Ovary (tissue), 10 donors: ENCODE measurements at regions of chr17 and their contacts with region 1.

Region 1: DNA sequence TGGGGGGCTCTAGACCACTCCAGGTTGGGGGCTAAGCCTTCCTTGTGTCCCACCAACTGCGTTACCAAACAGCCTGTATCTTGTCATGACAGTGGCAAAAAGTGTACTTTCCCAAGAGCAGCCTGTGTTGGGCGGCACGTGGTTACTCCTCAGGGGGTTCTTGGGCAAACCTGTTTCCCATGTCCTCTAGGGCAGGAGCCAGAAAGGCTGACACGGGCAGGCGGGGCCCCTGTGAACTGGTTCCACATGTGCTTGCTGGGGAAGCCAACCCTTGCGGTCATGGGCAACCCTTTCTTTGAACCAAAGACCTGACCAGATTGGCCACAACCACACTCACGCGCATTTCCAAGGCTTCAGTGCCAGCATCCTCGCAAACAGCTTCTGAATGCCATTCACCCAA is 228.5 kb downstream of the RBFOX3 start:
- DNase-seq: no peak
- H3K4me3 ChIP-seq: no peak overlapping the region
- H3K27ac ChIP-seq: no peak overlapping the region
- H3K4me1 ChIP-seq: no peaks in the 10 kb centered on the region
- H3K27me3 ChIP-seq: no peaks in the 10 kb centered on the region
- CTCF ChIP-seq: no peak
- EP300 ChIP-seq: no peak
- POLR2A ChIP-seq: no peak

Region 2: DNA sequence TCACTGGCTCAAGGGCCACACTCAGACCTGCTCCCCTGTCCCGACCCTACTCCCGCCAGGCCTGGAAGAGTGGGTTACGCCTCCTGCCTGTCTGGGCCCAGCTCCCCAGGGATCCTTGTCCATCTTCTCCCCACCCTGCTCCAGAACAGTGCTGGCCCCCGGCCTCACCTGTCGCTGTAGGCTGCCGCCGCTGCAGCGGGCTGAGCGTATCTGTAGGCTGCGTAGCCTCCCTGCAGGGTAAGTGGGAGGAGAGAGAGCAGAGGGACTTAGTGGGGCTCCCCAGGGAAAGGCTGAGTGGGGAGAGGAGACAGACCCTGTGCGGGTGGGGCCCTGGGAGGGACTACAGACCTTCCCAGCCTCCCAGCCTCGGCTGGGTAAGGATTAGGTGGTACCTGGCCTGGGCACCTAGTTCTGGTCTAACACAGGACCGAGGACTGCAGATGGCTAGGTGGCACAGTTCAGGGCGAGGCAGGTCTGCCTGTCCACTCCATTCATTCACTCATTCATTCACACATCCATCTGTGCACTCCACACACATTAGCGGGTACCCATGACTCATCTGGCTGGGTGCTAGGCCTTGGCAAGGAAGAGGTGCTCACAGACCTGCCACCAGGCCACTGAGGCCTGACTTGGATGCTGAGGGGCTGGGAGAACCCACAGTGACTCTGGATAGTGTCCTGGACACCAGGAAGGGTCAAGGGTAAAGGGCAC is 286.8 kb before region 1 on chr17:
- intact Hi-C with region 1: loop called in 1 of 4 experiments (anchors 5 kb)
- DNase-seq: no peak
- H3K4me3 ChIP-seq: no peak overlapping the region
- H3K27ac ChIP-seq: no peak overlapping the region
- H3K4me1 ChIP-seq: peaks cover 3% of the 10 kb centered on the region
- H3K27me3 ChIP-seq: no peaks in the 10 kb centered on the region
- CTCF ChIP-seq: no peak
- EP300 ChIP-seq: no peak
- POLR2A ChIP-seq: no peak